ENCODE measurements at regions of chr2 and their contacts with region 1.

Region 1: GRCh38 chr2:111168528-111169239 is 48.0 kb downstream of the BCL2L11 start:
- DNase-seq: peak; percentile 85 to 88 (median 88)
- ATAC-seq: peak; percentile 97
- H3K4me3 ChIP-seq: no peak overlapping the region
- H3K27ac ChIP-seq: peak overlapping the region; percentile 7; the same call in 1 of the 3 replicates
- H3K4me1 ChIP-seq: peaks cover 21 to 26% of the 10 kb centered on the region in 2 experiments
- H3K27me3 ChIP-seq: peaks cover 0 to 8% of the 10 kb centered on the region in 2 experiments; a peak in 2 of 5 replicates
- CTCF ChIP-seq: no peak
- EP300 ChIP-seq: peak; percentile 76; the same call in 1 of the 2 replicates
- POLR2A ChIP-seq: no peak
- RAD21 ChIP-seq: 0 out of 4 replicates have a peak, but pooled peaks of 1 of the 2 experiments have one; percentile 10

Region 2: GRCh38 chr2:111157798-111158197 is 10.9 kb before region 1 on chr2:
- CTCF ChIA-PET with region 1: no interaction called
- POLR2A ChIA-PET with region 1: interaction called, 23 read pairs
- in situ Hi-C with region 1: no loop called
- intact Hi-C with region 1: no loop called
- DNase-seq: no peak
- ATAC-seq: no peak
- H3K4me3 ChIP-seq: no peak overlapping the region
- H3K27ac ChIP-seq: no peak overlapping the region
- H3K4me1 ChIP-seq: no peaks in the 10 kb centered on the region
- H3K27me3 ChIP-seq: no peaks in the 10 kb centered on the region
- CTCF ChIP-seq: no peak
- EP300 ChIP-seq: no peak
- POLR2A ChIP-seq: no peak
- RAD21 ChIP-seq: no peak

Region 3: DNA sequence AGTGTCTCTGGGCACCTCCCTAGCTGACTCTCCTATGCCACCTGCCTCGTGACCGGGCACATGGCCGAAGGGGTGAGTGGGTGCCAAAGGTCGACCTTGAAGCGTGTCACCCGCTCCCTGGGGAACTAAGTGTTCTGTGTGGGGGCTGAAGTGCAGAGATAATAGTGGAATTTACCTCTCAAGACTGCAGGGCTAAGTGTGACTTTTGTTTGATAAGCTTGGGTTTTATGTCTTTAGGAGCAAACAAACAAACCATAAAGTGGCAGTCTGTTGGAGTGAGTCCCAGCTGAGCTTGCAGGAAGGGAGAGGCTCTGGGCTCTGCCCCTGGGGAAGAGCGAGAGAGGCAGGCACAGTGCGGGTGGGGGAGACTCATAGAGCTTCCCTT is 16.9 kb after region 1 on chr2:
- CTCF ChIA-PET with region 1: no interaction called
- POLR2A ChIA-PET with region 1: interaction called, 11 read pairs
- in situ Hi-C with region 1: no loop called
- intact Hi-C with region 1: no loop called
- DNase-seq: peak in 1 of 4 experiments; percentile 22
- ATAC-seq: peak; percentile 31
- H3K4me3 ChIP-seq: no peak overlapping the region
- H3K27ac ChIP-seq: no peak overlapping the region
- H3K4me1 ChIP-seq: peaks cover 12% of the 10 kb centered on the region in 2 experiments; a peak in 4 of 5 replicates
- H3K27me3 ChIP-seq: no peaks in the 10 kb centered on the region; a peak in 1 of 5 replicates
- CTCF ChIP-seq: no peak
- EP300 ChIP-seq: no peak
- POLR2A ChIP-seq: no peak
- RAD21 ChIP-seq: no peak